ENCODE measurements at regions of chr16 and their contacts with region 1.

Region 1: DNA sequence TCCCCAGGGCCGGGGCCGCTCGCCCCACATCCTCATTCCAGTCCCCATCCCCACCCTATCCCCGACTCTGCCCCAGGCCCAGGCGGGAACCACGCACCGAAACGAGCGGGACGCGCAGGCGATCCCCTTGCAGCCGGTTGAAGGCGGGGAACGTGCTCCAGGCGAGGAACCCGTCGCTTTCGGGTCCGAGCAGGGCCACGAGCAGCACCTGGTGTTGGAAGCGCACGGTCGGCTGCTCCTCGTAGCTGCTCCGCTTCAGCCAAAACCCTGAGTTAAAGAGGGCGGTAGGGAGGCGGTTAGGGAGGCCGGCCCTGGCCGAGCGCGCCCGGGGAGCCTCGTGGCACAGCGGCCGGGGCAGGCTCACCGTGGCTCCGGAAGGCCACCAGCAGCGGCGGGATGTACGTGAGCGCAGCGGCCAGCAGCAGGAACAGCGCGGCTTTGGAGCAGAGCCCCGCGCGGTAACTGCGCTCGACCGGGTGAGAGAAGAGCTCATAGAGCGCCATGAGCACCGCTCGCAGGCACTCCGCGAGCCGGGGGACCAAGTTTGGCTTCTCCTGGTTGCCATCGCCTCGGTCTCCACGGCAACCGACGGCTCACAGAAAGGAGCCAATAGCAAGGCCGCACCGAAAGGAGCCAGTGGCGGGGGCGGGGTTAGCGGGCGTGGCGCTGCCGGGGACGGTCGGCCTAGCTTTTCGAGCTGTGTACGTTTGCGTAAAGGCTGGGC is at the start of gene TMEM231:
- H3K4me3 ChIP-seq: peak within 1 kb of the TSS; percentile 69
- H3K27ac ChIP-seq: peak within 1 kb of the TSS; percentile 64
- H3K4me1 ChIP-seq: no peaks in the 10 kb centered on the region
- CTCF ChIP-seq: peak; percentile 87

Region 2: DNA sequence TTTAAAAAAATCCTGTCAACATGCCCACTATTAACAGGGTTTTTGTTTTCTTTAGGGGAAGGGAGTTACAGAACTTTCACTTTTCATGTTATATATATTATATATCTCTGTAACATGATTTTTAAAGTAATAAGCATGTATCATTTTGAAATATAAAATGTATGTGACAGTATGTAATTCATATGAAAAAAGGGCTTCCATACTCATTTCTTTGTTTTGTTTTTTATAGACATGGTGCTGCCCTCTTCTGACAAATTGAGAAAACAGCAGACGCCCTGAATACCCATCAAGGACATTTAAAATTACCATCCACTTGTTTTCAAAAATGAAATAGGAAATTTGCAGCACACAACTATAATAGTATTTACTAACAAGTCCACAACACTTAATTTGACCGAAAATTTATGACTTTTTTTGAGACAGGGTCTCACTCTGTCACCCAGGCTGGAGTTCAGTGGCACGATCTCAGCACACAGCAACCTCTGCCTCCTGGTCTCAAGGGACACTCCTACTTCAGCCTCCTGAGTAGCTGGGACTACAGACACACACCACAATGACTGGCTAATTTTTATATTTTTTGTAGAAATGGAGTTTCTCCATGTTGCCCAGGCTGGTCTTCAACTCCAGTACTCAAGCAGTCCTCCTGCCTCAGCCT is 152.9 kb before region 1 on chr16:
- CTCF ChIA-PET with region 1: no interaction called
- POLR2A ChIA-PET with region 1: no interaction called
- H3K4me3 ChIP-seq: no peak overlapping the region
- H3K27ac ChIP-seq: no peak overlapping the region
- H3K4me1 ChIP-seq: no peaks in the 10 kb centered on the region
- CTCF ChIP-seq: 0 out of 2 replicates have a peak, but pooled peaks have one; percentile 19

Region 3: GRCh38 chr16:75452464-75453190 is 103.2 kb before region 1 on chr16:
- CTCF ChIA-PET with region 1: no interaction called
- POLR2A ChIA-PET with region 1: no interaction called
- H3K4me3 ChIP-seq: no peak overlapping the region
- H3K27ac ChIP-seq: no peak overlapping the region
- H3K4me1 ChIP-seq: peaks cover 22% of the 10 kb centered on the region
- CTCF ChIP-seq: no peak

Region 4: GRCh38 chr16:75566040-75566810 is 10.4 kb after region 1 on chr16 and contains the start of gene GABARAPL2:
- CTCF ChIA-PET with region 1: no interaction called
- POLR2A ChIA-PET with region 1: interaction called, 22 read pairs
- H3K4me3 ChIP-seq: peak within 1 kb of the TSS; percentile 88
- H3K27ac ChIP-seq: peak within 1 kb of the TSS; percentile 40; the same call in 1 of the 2 replicates
- H3K4me1 ChIP-seq: no peaks in the 10 kb centered on the region
- CTCF ChIP-seq: no peak